GM12878 (cell line): ENCODE measurements at regions of chr5 and their contacts with region 1.

Region 1: DNA sequence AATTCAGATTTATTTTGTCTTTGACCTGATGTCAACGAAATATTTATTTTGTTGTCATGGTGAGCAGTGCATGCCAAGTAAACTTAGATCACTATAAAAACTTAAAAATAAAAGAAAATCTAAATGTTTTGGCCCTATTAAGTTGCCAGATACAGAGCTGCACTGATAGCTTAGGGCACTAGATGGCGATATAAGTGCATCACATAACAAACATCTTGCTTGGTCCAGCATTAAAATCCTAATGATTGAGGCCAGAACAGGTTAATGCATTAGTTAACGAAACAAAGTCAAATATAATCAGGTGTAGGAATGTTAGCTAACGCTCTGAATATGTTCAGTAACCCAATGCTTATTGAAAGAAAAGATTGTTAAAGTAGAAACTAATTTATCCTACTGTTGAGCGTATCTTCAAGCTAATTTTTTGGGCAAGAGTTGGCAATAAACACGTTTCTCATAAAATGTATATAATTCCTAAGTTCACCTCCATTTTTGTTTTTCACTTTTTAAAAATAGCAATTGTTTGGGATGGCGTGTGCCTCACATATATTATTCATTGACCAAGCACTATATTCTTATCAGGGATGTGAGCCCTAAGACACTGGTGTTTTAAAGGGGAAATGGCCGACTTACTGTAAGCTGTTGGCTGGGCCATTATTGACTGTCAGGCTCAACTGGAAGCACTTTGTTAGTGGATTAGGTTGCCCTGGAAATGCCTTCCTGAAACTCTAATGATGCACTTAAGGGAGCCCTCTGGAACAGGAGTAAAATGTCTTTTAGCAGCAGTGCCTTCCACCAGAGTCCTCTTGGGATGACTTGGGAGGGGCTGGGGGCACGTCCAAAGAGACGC is 33.3 kb downstream of the KCTD16 start:
- DNase-seq: no peak
- ATAC-seq: peak; percentile 92
- H3K4me3 ChIP-seq: no peak overlapping the region
- H3K27ac ChIP-seq: no peak overlapping the region
- H3K4me1 ChIP-seq: no peaks in the 10 kb centered on the region
- H3K27me3 ChIP-seq: peaks cover 1 to 11% of the 10 kb centered on the region in 2 experiments
- CTCF ChIP-seq: peak; percentile 77 to 82 (median 80)
- EP300 ChIP-seq: no peak
- POLR2A ChIP-seq: no peak
- RAD21 ChIP-seq: peak; percentile 92

Region 2: DNA sequence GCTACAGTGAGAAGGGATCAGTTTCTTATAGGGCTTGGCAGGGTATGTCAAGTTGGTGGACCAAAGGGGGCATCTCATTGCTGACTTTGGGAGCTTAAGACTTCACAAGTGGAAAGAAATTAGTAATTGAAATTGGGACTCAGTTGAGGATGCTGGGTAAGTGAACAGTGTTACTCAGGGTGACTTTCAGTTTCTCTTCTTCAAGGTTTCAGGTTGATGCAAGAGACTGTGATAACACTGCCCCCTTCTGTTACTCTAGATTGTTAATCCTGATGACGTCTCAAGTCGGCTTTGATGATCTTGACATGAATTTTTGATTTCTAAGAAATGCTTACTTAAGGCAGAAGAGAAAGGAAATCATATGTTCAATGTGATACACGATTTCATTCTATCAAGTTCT is 12.0 kb before region 1 on chr5:
- CTCF ChIA-PET with region 1: interaction called, 18 read pairs
- POLR2A ChIA-PET with region 1: no interaction called
- RAD21 ChIA-PET with region 1: interaction called, 7 read pairs
- SMC1A ChIA-PET with region 1: interaction called, 8 read pairs
- in situ Hi-C with region 1: no loop called
- intact Hi-C with region 1: no loop called
- DNase-seq: peak; percentile 73
- ATAC-seq: peak; percentile 85
- H3K4me3 ChIP-seq: no peak overlapping the region
- H3K27ac ChIP-seq: peak overlapping the region; percentile 73
- H3K4me1 ChIP-seq: peaks cover 42% of the 10 kb centered on the region
- H3K27me3 ChIP-seq: no peaks in the 10 kb centered on the region
- CTCF ChIP-seq: peak; percentile 52 to 73 (median 69); a peak in 5 of 6 replicates
- EP300 ChIP-seq: no peak
- POLR2A ChIP-seq: no peak
- RAD21 ChIP-seq: peak; percentile 78

Region 3: DNA sequence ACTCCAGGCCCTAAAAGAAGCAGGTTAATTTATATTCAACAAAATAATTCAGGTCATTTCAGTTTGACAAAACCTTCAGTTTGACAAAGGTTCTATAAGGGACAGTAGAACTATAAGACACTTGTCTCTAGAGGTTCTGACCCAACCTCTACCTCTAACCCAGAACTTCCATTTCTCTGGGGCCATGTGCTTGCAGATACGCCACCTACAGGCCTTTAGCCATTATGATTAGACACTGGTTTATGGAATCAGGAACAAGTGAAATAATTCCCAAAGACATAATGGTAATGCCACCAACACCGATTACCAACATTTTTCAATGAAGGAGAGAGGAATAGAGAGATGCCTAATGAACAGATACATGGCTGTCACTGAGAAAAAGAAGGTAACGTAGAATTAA is 897.3 kb after region 1 on chr5:
- CTCF ChIA-PET with region 1: interaction called, 4 read pairs
- POLR2A ChIA-PET with region 1: no interaction called
- RAD21 ChIA-PET with region 1: no interaction called
- SMC1A ChIA-PET with region 1: interaction called, 3 read pairs
- in situ Hi-C with region 1: no loop called
- intact Hi-C with region 1: loop called (anchors 10 kb)
- DNase-seq: no peak
- ATAC-seq: 0 out of 3 replicates have a peak, but pooled peaks have one; percentile 24
- H3K4me3 ChIP-seq: no peak overlapping the region
- H3K27ac ChIP-seq: no peak overlapping the region
- H3K4me1 ChIP-seq: no peaks in the 10 kb centered on the region
- H3K27me3 ChIP-seq: no peaks in the 10 kb centered on the region
- CTCF ChIP-seq: peak; percentile 28 to 36 (median 29); a peak in 4 of 6 replicates
- EP300 ChIP-seq: no peak
- POLR2A ChIP-seq: no peak
- RAD21 ChIP-seq: peak; percentile 50; the same call in 1 of the 2 replicates

Region 4: GRCh38 chr5:145237843-145238242 is 1033.9 kb after region 1 on chr5:
- CTCF ChIA-PET with region 1: interaction called, 53 read pairs
- POLR2A ChIA-PET with region 1: no interaction called
- RAD21 ChIA-PET with region 1: interaction called, 25 read pairs
- SMC1A ChIA-PET with region 1: interaction called, 19 read pairs
- in situ Hi-C with region 1: loop called (anchors 10 kb)
- intact Hi-C with region 1: loop called (anchors 2 kb)
- DNase-seq: no peak
- ATAC-seq: peak; percentile 89
- H3K4me3 ChIP-seq: no peak overlapping the region
- H3K27ac ChIP-seq: no peak overlapping the region
- H3K4me1 ChIP-seq: no peaks in the 10 kb centered on the region
- H3K27me3 ChIP-seq: no peaks in the 10 kb centered on the region
- CTCF ChIP-seq: peak; percentile 50 to 60 (median 55); a peak in 5 of 6 replicates
- EP300 ChIP-seq: no peak
- POLR2A ChIP-seq: no peak
- RAD21 ChIP-seq: peak; percentile 75

Region 5: DNA sequence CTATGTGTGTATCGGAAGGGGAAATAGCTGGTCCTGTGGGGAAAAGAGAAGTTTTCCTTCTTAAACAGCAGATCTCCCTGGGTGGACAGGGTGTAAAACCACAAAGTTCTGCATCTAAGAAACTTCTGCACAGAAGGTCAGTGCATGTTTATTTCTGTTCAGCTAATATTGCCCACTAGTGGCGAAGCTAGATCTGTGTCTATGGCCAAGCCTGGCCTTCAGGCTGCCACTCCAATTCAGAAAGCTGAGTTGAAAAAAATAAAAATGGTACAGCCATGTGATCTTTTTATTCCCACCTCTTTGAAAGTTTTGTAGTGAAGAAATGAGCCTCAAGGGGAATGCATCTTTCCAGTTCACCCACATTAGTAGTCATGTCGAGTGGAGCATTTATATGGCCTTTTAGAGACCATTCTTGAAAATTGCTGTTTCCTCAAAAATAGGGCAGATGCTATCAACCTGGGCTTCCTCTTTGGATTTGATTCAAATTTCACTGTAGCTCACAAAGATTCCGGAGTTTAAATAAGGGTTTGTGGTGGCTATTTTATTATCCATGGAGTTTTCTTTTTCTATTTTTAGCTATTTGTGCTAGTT is 1143.1 kb after region 1 on chr5:
- CTCF ChIA-PET with region 1: interaction called, 9 read pairs
- POLR2A ChIA-PET with region 1: no interaction called
- RAD21 ChIA-PET with region 1: interaction called, 4 read pairs
- SMC1A ChIA-PET with region 1: no interaction called
- in situ Hi-C with region 1: no loop called
- intact Hi-C with region 1: loop called (anchors 2 kb)
- DNase-seq: no peak
- ATAC-seq: peak; percentile 76
- H3K4me3 ChIP-seq: no peak overlapping the region
- H3K27ac ChIP-seq: no peak overlapping the region
- H3K4me1 ChIP-seq: no peaks in the 10 kb centered on the region
- H3K27me3 ChIP-seq: no peaks in the 10 kb centered on the region
- CTCF ChIP-seq: peak; percentile 30 to 42 (median 42); a peak in 5 of 6 replicates
- EP300 ChIP-seq: no peak
- POLR2A ChIP-seq: no peak
- RAD21 ChIP-seq: peak; percentile 21; the same call in 1 of the 2 replicates

Region 6: DNA sequence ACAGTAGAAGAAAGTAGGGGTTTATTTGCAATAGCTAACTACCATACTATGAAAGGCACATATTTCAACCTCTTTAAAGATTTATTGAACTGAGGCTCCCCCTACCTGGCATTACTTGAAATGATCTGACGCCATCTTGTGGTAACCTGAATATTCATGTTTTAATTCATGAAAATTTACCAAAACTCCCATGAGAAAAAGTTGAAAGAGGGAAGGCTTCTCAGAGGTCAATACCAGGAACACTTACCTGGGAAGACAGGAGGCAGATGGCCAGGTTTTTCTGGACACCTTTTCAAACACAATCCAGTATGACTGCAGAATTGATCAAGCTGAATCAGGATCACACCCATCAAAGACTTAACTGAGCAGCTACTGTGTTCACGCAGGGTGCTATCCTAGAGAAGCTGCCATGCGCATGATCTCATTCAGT is 1621.8 kb after region 1 on chr5:
- CTCF ChIA-PET with region 1: interaction called, 32 read pairs
- POLR2A ChIA-PET with region 1: no interaction called
- RAD21 ChIA-PET with region 1: interaction called, 4 read pairs
- SMC1A ChIA-PET with region 1: interaction called, 12 read pairs
- in situ Hi-C with region 1: loop called (anchors 5 kb)
- intact Hi-C with region 1: loop called (anchors 1 kb)
- DNase-seq: no peak
- ATAC-seq: peak; percentile 82
- H3K4me3 ChIP-seq: no peak overlapping the region
- H3K27ac ChIP-seq: no peak overlapping the region
- H3K4me1 ChIP-seq: no peaks in the 10 kb centered on the region
- H3K27me3 ChIP-seq: no peaks in the 10 kb centered on the region
- CTCF ChIP-seq: peak; percentile 61 to 73 (median 70)
- EP300 ChIP-seq: no peak
- POLR2A ChIP-seq: no peak
- RAD21 ChIP-seq: peak; percentile 65

Region 7: DNA sequence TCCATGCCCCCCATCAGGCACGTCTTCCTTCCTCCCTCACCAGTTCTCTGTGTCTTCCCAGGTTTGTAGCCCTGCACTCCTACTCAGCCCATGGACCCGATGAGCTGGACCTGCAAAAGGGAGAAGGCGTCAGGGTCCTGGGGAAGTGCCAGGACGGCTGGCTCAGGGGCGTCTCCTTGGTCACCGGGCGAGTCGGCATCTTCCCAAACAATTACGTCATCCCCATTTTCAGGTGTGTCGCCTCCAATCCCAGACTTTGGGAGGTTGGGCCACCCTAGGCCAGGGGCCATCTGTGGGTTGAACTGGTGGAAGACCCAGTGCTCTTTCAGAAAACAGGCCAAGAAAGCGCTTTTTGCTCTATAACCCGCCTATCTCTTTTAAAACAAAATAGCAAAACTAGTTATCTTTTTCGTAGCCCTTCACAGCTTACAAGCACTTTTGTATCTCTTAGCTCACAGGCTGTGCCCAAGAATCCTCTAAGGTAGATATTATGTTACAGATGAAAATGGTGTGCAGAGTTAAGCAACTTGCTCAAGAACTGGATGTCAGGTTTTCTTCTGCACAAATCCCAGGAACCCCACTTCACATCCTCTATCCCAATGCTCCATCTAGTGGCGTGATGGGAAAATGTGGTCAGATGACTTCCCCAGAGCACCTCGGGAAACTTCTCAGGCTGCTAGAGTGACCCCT is 1845.2 kb after region 1 on chr5:
- CTCF ChIA-PET with region 1: interaction called, 3 read pairs
- POLR2A ChIA-PET with region 1: no interaction called
- RAD21 ChIA-PET with region 1: no interaction called
- SMC1A ChIA-PET with region 1: no interaction called
- in situ Hi-C with region 1: no loop called
- intact Hi-C with region 1: loop called (anchors 10 kb)
- DNase-seq: no peak
- ATAC-seq: peak; percentile 59
- H3K4me3 ChIP-seq: no peak overlapping the region
- H3K27ac ChIP-seq: no peak overlapping the region
- H3K4me1 ChIP-seq: no peaks in the 10 kb centered on the region
- H3K27me3 ChIP-seq: no peaks in the 10 kb centered on the region; a peak in 3 of 4 replicates
- CTCF ChIP-seq: peak; percentile 34 to 52 (median 40); a peak in 4 of 6 replicates
- EP300 ChIP-seq: no peak
- POLR2A ChIP-seq: no peak
- RAD21 ChIP-seq: peak; percentile 68